ENCODE measurements at regions of chr12 and their contacts with region 1.

Region 1: GRCh38 chr12:116358893-116359761 is 81.6 kb upstream of the MED13L start:
- DNase-seq: peak; percentile 76
- ATAC-seq: peak; percentile 67
- H3K4me3 Mint-ChIP-seq: peak overlapping the region; percentile 69
- H3K27ac Mint-ChIP-seq: peak overlapping the region; percentile 90
- H3K4me1 Mint-ChIP-seq: peaks cover 27% of the 10 kb centered on the region
- H3K27me3 Mint-ChIP-seq: no peaks in the 10 kb centered on the region

Region 2: DNA sequence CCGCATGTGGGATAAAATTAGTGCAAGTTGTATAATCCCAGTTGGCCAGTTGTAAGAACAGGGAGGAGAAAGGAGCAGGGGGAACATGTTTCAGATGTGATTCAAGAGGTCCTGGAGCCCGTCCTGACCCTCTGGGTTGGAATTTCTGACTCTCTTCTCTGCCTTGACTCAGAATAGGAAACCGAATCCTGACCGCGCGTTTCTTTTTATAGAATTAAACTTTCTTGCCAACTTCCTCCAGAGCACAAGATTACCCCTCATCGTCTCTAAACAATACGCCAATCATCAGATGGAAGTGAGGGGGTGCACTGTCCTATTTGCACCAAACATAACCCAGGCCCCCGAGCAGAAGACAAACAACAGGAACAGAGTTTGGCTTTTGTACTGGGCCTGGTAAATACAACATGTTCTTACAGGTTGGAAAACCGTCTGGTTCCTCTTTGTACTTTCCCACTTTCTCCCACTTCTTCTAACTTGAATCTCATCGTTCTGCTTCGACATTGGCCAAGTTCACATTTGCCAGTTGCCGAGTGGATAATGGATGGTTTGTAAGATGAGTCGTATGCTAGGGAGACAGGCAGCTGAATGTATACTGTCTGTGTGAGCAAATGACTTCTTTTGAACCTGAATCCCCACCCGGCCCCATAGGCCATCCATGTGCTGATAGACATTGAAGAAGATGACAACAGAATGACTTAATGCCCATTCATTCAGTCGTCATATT is 39.1 kb before region 1 on chr12:
- CTCF ChIA-PET with region 1: no interaction called
- POLR2A ChIA-PET with region 1: no interaction called
- intact Hi-C with region 1: loop called (anchors 1 to 2 kb)
- DNase-seq: peak; percentile 65
- ATAC-seq: peak; percentile 68
- H3K4me3 Mint-ChIP-seq: peak overlapping the region; percentile 46
- H3K27ac Mint-ChIP-seq: peak overlapping the region; percentile 55
- H3K4me1 Mint-ChIP-seq: peaks cover 37% of the 10 kb centered on the region
- H3K27me3 Mint-ChIP-seq: no peaks in the 10 kb centered on the region

Region 3: DNA sequence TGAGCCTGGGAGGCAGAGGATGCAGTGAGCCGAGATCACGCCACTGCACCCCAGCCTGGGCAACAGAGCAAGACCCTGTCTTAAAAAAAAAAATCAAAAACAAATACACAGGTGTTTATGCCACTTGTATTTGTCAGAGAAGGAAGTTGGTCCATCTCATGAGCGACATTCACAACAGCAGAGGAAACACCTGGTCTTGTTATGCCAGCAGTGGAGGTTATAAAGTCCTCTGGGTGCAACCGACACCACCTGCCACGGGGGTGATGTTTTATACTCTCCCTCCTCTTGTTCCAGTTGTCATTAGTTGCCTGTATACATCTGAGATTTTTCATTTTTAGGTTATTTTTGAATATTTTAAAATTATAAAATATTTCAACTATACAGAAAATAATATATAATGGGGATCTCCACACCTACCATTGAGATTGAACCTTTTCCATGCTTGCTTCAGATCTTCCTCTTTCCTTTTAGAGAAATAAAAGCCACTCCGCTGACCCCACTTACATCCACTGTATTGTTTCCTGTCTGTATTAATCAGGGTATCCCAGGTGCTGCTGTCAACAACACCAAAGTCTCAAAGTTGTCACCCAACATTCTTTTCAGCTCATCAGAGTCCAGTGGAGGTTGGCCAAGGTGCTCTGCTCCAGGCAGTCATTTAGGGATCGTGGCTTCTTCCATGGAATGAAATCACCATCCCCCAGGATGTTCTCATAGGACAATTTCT is 444.0 kb after region 1 on chr12:
- CTCF ChIA-PET with region 1: no interaction called
- POLR2A ChIA-PET with region 1: no interaction called
- intact Hi-C with region 1: no loop called
- DNase-seq: no peak
- ATAC-seq: no peak
- H3K4me3 Mint-ChIP-seq: no peak overlapping the region
- H3K27ac Mint-ChIP-seq: no peak overlapping the region
- H3K4me1 Mint-ChIP-seq: no peaks in the 10 kb centered on the region
- H3K27me3 Mint-ChIP-seq: no peaks in the 10 kb centered on the region